SK-N-SH (cell line): ENCODE measurements at regions of chr1 and their contacts with region 1.

Region 1: GRCh38 chr1:23539698-23540266 is 8.7 kb upstream of the E2F2 start:
- DNase-seq: peak; percentile 90
- H3K4me3 ChIP-seq: peak overlapping the region in 1 of 2 experiments; percentile 31; a peak in 1 of 4 replicates
- H3K27ac ChIP-seq: peak overlapping the region in 1 of 2 experiments; percentile 14; a peak in 1 of 4 replicates
- H3K4me1 ChIP-seq: peaks cover 4 to 9% of the 10 kb centered on the region in 2 experiments; a peak in 2 of 4 replicates
- H3K27me3 ChIP-seq: no peaks in the 10 kb centered on the region
- CTCF ChIP-seq: peak; percentile 97
- EP300 ChIP-seq: no peak
- RAD21 ChIP-seq: peak; percentile 94

Region 2: GRCh38 chr1:23122023-23122748 is 417.6 kb before region 1 on chr1:
- CTCF ChIA-PET with region 1: no interaction called
- POLR2A ChIA-PET with region 1: no interaction called
- DNase-seq: no peak
- H3K4me3 ChIP-seq: no peak overlapping the region
- H3K27ac ChIP-seq: peak overlapping the region; percentile 47 to 52; a peak in 3 of 4 replicates
- H3K4me1 ChIP-seq: peaks cover 6 to 27% of the 10 kb centered on the region in 2 experiments; a peak in 3 of 4 replicates
- H3K27me3 ChIP-seq: no peaks in the 10 kb centered on the region
- CTCF ChIP-seq: no peak
- EP300 ChIP-seq: no peak
- RAD21 ChIP-seq: no peak

Region 3: DNA sequence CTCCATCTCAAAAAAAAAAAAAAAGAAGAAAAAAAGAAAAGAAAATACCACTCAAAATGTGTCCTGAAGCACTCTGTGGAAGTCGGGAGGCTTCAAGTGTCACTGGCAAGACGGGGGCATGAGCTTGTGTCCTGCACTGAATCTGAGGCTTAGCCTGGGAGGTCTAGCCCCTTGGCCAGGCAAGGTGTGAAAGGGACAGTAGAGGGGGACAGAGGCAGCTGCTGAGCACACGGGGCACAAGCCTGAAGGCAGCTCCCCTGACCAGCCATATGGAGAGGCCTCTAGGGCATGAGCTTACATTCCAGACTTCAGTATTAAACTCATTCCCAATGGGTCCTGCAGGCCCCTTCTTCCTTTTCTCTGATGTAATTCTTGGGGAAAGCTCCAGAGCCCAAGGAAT is 32.3 kb before region 1 on chr1:
- CTCF ChIA-PET with region 1: interaction called, 503 read pairs
- POLR2A ChIA-PET with region 1: interaction called, 4 read pairs
- DNase-seq: no peak
- H3K4me3 ChIP-seq: no peak overlapping the region
- H3K27ac ChIP-seq: no peak overlapping the region
- H3K4me1 ChIP-seq: no peaks in the 10 kb centered on the region
- H3K27me3 ChIP-seq: no peaks in the 10 kb centered on the region
- CTCF ChIP-seq: no peak
- EP300 ChIP-seq: no peak
- RAD21 ChIP-seq: no peak

Region 4: GRCh38 chr1:23577056-23578004 is 37.5 kb after region 1 on chr1:
- CTCF ChIA-PET with region 1: interaction called, 11 read pairs
- POLR2A ChIA-PET with region 1: no interaction called
- DNase-seq: no peak
- H3K4me3 ChIP-seq: peak overlapping the region in 1 of 2 experiments; percentile 46; a peak in 2 of 4 replicates
- H3K27ac ChIP-seq: peak overlapping the region; percentile 85 to 99
- H3K4me1 ChIP-seq: peaks cover 10 to 40% of the 10 kb centered on the region in 2 experiments
- H3K27me3 ChIP-seq: no peaks in the 10 kb centered on the region
- CTCF ChIP-seq: no peak
- EP300 ChIP-seq: peak in 1 of 2 experiments; percentile 57; a peak in 1 of 4 replicates
- RAD21 ChIP-seq: no peak

Region 5: GRCh38 chr1:23643736-23644554 is 104.2 kb after region 1 on chr1:
- CTCF ChIA-PET with region 1: interaction called, 708 read pairs
- POLR2A ChIA-PET with region 1: interaction called, 3 read pairs
- DNase-seq: no peak
- H3K4me3 ChIP-seq: no peak overlapping the region
- H3K27ac ChIP-seq: no peak overlapping the region; a peak in 1 of 4 replicates
- H3K4me1 ChIP-seq: peaks cover 0 to 19% of the 10 kb centered on the region in 2 experiments; a peak in 1 of 4 replicates
- H3K27me3 ChIP-seq: no peaks in the 10 kb centered on the region
- CTCF ChIP-seq: no peak
- EP300 ChIP-seq: no peak
- RAD21 ChIP-seq: no peak

Region 6: GRCh38 chr1:23664837-23665795 is 125.3 kb after region 1 on chr1:
- CTCF ChIA-PET with region 1: interaction called, 34 read pairs
- POLR2A ChIA-PET with region 1: no interaction called
- DNase-seq: peak; percentile 54
- H3K4me3 ChIP-seq: no peak overlapping the region; a peak in 1 of 4 replicates
- H3K27ac ChIP-seq: no peak overlapping the region
- H3K4me1 ChIP-seq: no peaks in the 10 kb centered on the region
- H3K27me3 ChIP-seq: no peaks in the 10 kb centered on the region
- CTCF ChIP-seq: peak; percentile 66
- EP300 ChIP-seq: no peak
- RAD21 ChIP-seq: peak; percentile 68

Region 7: DNA sequence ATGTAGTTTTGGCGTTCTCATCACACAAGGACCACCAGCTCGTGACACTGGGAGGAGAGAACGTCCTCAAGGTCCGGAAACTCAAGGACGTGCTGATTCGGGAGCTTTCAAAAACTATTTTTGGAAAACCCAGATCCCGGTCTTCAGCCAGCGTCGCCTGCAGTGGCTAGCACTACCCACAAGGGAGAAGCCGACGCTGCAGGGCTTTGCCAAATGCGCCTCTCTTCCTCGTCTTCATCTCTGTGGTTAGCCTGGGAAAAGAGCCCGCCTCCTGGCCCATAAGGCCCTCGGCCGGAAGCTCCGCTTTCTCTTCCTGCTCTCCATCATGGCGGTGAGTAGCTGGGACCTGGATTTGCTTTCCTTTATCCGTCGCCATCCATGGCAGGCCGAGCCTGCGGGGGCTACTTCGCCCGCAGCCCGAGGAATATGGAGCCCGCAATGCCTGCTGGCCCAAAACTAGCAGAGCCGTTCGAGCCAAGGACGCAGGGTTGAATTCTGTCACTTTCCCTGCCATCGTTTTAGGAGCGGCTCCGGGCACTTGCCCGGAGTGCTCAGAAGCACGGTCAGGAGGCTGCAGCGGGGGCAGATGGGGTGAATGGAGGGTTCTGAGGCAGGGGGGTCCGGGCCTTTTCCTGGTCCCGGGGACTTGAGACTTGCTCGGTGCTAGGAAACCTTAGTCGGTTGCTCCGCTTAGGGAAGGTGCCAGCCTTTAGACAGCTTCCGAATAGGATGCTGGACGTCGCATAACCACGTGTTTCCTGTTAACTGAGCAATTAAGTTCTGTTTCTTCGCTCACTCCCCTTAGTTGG is 151.9 kb after region 1 on chr1 and contains the start of gene RPL11:
- CTCF ChIA-PET with region 1: interaction called, 15 read pairs
- POLR2A ChIA-PET with region 1: interaction called, 5 read pairs
- DNase-seq: peak; percentile 94
- H3K4me3 ChIP-seq: peak within 1 kb of the TSS; percentile 96 to 98
- H3K27ac ChIP-seq: peak within 1 kb of the TSS; percentile 82 to 92
- H3K4me1 ChIP-seq: peaks cover 19 to 34% of the 10 kb centered on the region in 2 experiments; a peak in 3 of 4 replicates
- H3K27me3 ChIP-seq: no peaks in the 10 kb centered on the region
- CTCF ChIP-seq: peak; percentile 70
- EP300 ChIP-seq: peak in 1 of 2 experiments; percentile 36; a peak in 2 of 4 replicates
- RAD21 ChIP-seq: peak; percentile 35
- polyA plus RNA-seq, gene RPL11: 2,231 and 2,255 TPM in 2 replicates